ENCODE measurements at regions of chr1 and their contacts with region 1.

Region 1: GRCh38 chr1:110460253-110461220 is 9.6 kb downstream of the PROK1 start:
- DNase-seq: peak; percentile 80
- H3K4me3 ChIP-seq: no peak overlapping the region
- H3K27ac ChIP-seq: no peak overlapping the region
- H3K4me1 ChIP-seq: peaks cover 30% of the 10 kb centered on the region
- H3K27me3 ChIP-seq: no peaks in the 10 kb centered on the region
- CTCF ChIP-seq: peak; percentile 100

Region 2: GRCh38 chr1:110053557-110054428 is 406.7 kb before region 1 on chr1:
- CTCF ChIA-PET with region 1: interaction called, 3 read pairs
- POLR2A ChIA-PET with region 1: no interaction called
- intact Hi-C with region 1: loop called (anchors 5 kb)
- DNase-seq: peak in 1 of 2 experiments; percentile 58
- H3K4me3 ChIP-seq: no peak overlapping the region
- H3K27ac ChIP-seq: no peak overlapping the region
- H3K4me1 ChIP-seq: peaks cover 16% of the 10 kb centered on the region; the same call in 1 of the 2 replicates
- H3K27me3 ChIP-seq: no peaks in the 10 kb centered on the region
- CTCF ChIP-seq: peak; percentile 99

Region 3: GRCh38 chr1:110312188-110313121 is 148.1 kb before region 1 on chr1:
- CTCF ChIA-PET with region 1: interaction called, 8 read pairs
- POLR2A ChIA-PET with region 1: no interaction called
- intact Hi-C with region 1: loop called (anchors 2 kb)
- DNase-seq: peak; percentile 72 to 74
- H3K4me3 ChIP-seq: no peak overlapping the region
- H3K27ac ChIP-seq: no peak overlapping the region
- H3K4me1 ChIP-seq: no peaks in the 10 kb centered on the region
- H3K27me3 ChIP-seq: no peaks in the 10 kb centered on the region
- CTCF ChIP-seq: peak; percentile 99

Region 4: GRCh38 chr1:110407260-110408210 is 53.0 kb before region 1 on chr1 and contains the start of gene LAMTOR5:
- CTCF ChIA-PET with region 1: interaction called, 25 read pairs
- POLR2A ChIA-PET with region 1: interaction called, 17 read pairs
- intact Hi-C with region 1: loop called (anchors 1 kb)
- DNase-seq: peak; percentile 93
- H3K4me3 ChIP-seq: peak within 1 kb of the TSS; percentile 84
- H3K27ac ChIP-seq: peak within 1 kb of the TSS; percentile 60
- H3K4me1 ChIP-seq: peaks cover 22% of the 10 kb centered on the region
- H3K27me3 ChIP-seq: no peaks in the 10 kb centered on the region
- CTCF ChIP-seq: peak; percentile 40; the same call in 1 of the 2 replicates
- total RNA-seq, gene LAMTOR5: 140 and 160 TPM in 2 replicates

Region 5: GRCh38 chr1:110433803-110434202 is 26.7 kb before region 1 on chr1:
- CTCF ChIA-PET with region 1: interaction called, 11 read pairs
- POLR2A ChIA-PET with region 1: no interaction called
- intact Hi-C with region 1: no loop called
- DNase-seq: peak; percentile 87 to 92
- H3K4me3 ChIP-seq: no peak overlapping the region
- H3K27ac ChIP-seq: peak overlapping the region; percentile 53
- H3K4me1 ChIP-seq: peaks cover 17% of the 10 kb centered on the region
- H3K27me3 ChIP-seq: peaks cover 15% of the 10 kb centered on the region
- CTCF ChIP-seq: peak; percentile 61

Region 6: DNA sequence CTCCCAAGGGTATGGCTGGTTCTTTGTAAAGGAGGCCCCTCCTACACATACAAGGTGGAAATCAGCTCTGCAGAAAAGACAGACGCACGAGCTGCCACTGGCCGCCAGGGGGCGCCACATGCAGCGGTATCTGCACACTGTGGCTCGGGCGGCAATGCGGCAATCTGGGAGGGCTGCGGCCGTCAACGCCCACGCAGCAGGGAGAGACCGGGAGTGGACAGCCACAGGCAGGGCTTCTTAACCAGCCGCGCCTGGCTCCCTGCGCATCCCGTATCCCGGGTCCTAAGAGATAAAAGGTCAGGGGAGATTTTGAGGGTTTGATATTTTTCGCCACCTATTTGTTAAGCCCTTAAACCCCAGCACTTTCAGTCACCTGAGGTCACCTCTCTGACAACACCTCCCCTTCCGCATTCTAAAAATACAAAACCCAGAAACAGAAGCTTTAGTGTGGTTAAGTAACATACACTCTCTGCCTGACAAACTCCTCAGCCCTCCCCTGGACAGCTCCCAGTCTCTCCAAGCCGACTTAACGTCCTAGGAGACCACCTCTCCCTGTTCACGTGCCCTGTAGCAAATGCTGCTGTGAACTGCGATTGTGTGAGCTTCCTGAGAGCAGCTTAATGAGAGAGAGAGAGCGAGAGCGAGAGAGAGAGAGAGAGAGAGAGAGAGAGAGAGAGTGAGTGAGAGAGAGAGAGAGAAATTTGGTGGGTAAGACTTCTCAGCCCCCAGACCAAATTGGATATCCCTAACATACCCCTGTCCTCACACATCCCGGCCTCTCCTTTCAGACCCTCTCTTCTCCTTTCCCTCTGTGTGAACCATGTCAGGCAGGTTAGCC is 159.1 kb after region 1 on chr1:
- CTCF ChIA-PET with region 1: interaction called, 5 read pairs
- POLR2A ChIA-PET with region 1: no interaction called
- intact Hi-C with region 1: loop called (anchors 2 kb)
- DNase-seq: peak; percentile 60 to 82
- H3K4me3 ChIP-seq: no peak overlapping the region
- H3K27ac ChIP-seq: no peak overlapping the region
- H3K4me1 ChIP-seq: no peaks in the 10 kb centered on the region; the same call in 1 of the 2 replicates
- H3K27me3 ChIP-seq: peaks cover 40% of the 10 kb centered on the region; the same call in 1 of the 2 replicates
- CTCF ChIP-seq: peak; percentile 99